PC-3 (cell line): ENCODE measurements at regions of chr3 and their contacts with region 1.

Region 1: GRCh38 chr3:195914648-195915473 is 6.5 kb upstream of the TNK2 start:
- DNase-seq: peak; percentile 99
- ATAC-seq: peak; percentile 92
- H3K4me3 ChIP-seq: peak overlapping the region; percentile 54
- H3K27ac ChIP-seq: peak overlapping the region; percentile 88
- H3K4me1 ChIP-seq: peaks cover 36% of the 10 kb centered on the region
- H3K27me3 ChIP-seq: no peaks in the 10 kb centered on the region
- CTCF ChIP-seq: peak; percentile 97

Region 2: DNA sequence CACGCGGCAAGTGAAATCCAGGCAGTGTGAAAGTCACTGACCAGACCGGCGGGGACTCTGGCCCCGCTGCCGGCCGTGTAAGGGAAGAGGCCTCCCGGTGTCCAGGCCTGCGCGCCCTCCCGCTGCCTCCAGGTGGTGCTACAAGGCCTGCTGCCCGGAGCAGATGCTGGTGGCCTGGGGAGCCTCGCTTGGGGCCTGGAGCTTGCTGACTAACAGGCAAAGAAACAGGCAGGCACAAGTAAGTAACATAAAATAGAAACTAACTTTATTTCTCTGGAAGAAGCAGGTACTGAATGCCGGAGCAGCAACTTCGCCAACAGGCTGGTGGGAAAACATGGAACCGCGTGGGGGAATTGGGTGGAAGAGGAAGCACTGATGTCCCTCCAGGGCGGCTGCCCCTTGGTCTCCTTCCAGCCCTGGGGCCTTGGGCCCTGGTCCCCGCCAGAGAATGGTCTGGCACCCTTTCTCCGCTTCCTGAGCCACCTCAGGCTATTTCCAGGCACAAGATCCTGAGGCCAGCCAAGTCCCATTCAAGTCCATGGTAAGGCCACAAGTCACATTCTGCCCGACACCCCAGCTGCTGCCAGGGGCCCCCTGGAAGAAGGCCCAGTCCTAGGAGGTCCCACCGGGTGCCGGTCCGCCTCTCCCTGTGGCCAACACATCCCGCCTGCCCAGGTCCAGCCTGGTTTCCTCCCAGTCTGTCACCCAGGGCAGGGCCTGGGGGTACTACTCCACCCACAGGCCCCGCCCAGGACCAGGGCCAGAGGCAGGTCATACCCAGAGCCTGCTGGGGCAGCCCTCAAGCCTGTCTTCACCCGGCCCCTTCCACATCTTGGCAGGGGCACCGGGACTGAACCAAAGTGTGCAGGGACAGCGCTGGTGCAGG is 51.5 kb before region 1 on chr3:
- CTCF ChIA-PET with region 1: interaction called, 9 read pairs
- POLR2A ChIA-PET with region 1: no interaction called
- intact Hi-C with region 1: loop called (anchors 1 kb)
- DNase-seq: peak; percentile 88
- ATAC-seq: peak; percentile 94
- H3K4me3 ChIP-seq: no peak overlapping the region
- H3K27ac ChIP-seq: peak overlapping the region; percentile 29
- H3K4me1 ChIP-seq: peaks cover 14% of the 10 kb centered on the region
- H3K27me3 ChIP-seq: no peaks in the 10 kb centered on the region
- CTCF ChIP-seq: peak; percentile 95

Region 3: DNA sequence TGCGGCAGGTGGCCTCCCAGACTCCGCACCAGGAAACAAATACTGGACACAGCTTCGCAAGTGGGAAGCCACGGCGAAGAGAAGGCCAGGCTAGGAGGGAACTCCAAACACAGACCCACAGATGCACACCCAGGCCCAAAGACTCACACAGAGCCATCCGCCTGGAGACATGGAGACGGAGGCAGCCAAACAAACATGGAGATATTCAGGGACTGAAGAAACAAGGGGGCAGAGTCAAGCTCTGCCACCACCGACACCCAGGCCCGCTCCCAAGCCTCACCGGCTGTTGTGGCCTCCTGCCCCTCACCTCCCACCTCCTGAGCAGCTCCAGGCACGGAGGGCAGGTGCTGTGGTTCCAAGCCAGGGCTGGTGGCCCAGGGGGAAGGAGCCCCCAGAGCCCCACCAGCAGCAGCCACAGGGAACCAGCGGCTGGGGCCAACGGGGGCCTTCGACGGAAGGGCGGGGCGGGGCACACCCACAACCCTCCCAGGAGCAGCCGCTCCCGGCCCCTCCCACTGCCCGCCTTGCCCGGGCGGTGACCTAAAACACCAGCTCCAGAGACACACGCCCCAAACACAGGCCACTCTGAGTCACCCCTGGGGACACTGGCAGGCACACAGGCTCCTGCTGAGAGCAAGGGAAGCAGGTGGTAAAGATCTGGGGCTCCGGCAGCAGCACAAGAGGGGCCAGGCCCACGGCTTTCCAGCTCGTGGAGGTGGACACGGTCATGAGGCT is 38.4 kb before region 1 on chr3:
- CTCF ChIA-PET with region 1: no interaction called
- POLR2A ChIA-PET with region 1: no interaction called
- intact Hi-C with region 1: loop called (anchors 1 kb)
- DNase-seq: peak; percentile 90
- ATAC-seq: peak; percentile 95
- H3K4me3 ChIP-seq: peak overlapping the region; percentile 38
- H3K27ac ChIP-seq: peak overlapping the region; percentile 54
- H3K4me1 ChIP-seq: peaks cover 30% of the 10 kb centered on the region
- H3K27me3 ChIP-seq: no peaks in the 10 kb centered on the region
- CTCF ChIP-seq: no peak